ENCODE measurements at regions of chr5 and their contacts with region 1.

Region 1: GRCh38 chr5:146565764-146566367 is 49.9 kb upstream of the GPR151 start:
- DNase-seq: peak; percentile 72
- ATAC-seq: peak; percentile 58
- H3K4me3 ChIP-seq: no peak overlapping the region
- H3K27ac ChIP-seq: no peak overlapping the region
- H3K4me1 ChIP-seq: peaks cover 22% of the 10 kb centered on the region
- H3K27me3 ChIP-seq: 0 out of 2 replicates have a peak, but pooled peaks cover 3% of the 10 kb centered on the region
- CTCF ChIP-seq: peak; percentile 90

Region 2: GRCh38 chr5:146548781-146549449 is 17.0 kb before region 1 on chr5:
- CTCF ChIA-PET with region 1: no interaction called
- POLR2A ChIA-PET with region 1: interaction called, 38 read pairs
- intact Hi-C with region 1: no loop called
- DNase-seq: no peak
- ATAC-seq: no peak
- H3K4me3 ChIP-seq: no peak overlapping the region
- H3K27ac ChIP-seq: no peak overlapping the region
- H3K4me1 ChIP-seq: no peaks in the 10 kb centered on the region
- H3K27me3 ChIP-seq: peaks cover 55% of the 10 kb centered on the region
- CTCF ChIP-seq: no peak

Region 3: DNA sequence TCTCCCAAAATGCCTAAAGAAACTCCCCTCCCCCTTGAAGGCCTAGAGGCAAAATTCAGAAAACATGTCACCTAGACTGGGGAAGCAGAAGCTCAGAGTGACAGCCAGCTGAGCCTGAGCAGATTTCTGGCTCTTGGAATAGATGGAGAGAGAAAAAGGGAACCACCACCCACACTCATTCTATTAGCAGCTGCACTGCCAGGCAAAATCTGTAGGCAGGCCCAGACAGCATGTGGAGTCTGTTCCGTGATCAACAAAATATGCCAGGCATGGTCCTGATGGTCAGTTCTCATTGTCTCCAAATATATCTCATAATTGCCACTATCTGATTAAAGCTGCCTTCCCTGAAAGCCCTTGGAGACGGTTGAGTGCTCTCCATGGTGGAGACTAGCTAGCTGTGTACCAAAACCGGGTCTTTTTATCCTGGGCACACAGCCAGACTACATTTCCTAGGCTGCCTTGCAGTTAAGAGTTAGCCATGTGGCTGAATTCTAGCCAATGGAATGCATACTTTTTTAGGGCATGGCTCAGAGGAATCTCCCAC is 81.9 kb after region 1 on chr5:
- CTCF ChIA-PET with region 1: no interaction called
- POLR2A ChIA-PET with region 1: no interaction called
- intact Hi-C with region 1: no loop called
- DNase-seq: no peak
- ATAC-seq: no peak
- H3K4me3 ChIP-seq: no peak overlapping the region
- H3K27ac ChIP-seq: no peak overlapping the region
- H3K4me1 ChIP-seq: no peaks in the 10 kb centered on the region
- H3K27me3 ChIP-seq: peaks cover 56% of the 10 kb centered on the region
- CTCF ChIP-seq: no peak

Measured in PC-3 (cell line).